GM10248 (cell line): ENCODE measurements at regions of chr20 and their contacts with region 1.

Region 1: GRCh38 chr20:36399147-36399968 is 93.2 kb downstream of the DLGAP4 start:
- DNase-seq: peak; percentile 68
- CTCF ChIP-seq: peak; percentile 46

Region 2: GRCh38 chr20:36004045-36004444 is 395.3 kb before region 1 on chr20:
- CTCF ChIA-PET with region 1: no interaction called
- POLR2A ChIA-PET with region 1: no interaction called
- DNase-seq: no peak
- CTCF ChIP-seq: no peak

Region 3: GRCh38 chr20:36273414-36274180 is 125.8 kb before region 1 on chr20:
- CTCF ChIA-PET with region 1: interaction called, 23 read pairs
- POLR2A ChIA-PET with region 1: no interaction called
- DNase-seq: peak; percentile 51
- CTCF ChIP-seq: peak; percentile 53

Region 4: DNA sequence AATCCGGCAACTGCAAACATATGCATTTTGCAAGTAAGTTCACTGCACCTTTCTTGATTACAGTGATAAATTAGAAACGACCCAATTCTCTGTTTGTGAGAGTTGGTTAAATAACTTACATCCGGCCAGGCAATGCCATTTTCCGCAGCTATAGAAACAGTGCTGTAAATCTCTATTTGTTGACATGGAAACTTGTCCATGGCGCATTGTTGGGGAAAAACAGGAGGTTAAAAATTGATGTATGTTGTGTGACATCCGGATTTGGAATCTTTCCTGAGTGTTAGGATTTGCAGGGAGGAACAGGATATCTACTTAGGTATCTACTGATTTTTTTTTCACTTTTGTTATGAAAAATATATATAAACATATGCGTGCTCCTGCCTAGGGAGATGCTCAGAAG is 26.7 kb before region 1 on chr20:
- CTCF ChIA-PET with region 1: no interaction called
- POLR2A ChIA-PET with region 1: no interaction called
- DNase-seq: no peak
- CTCF ChIP-seq: no peak

Region 5: GRCh38 chr20:36421641-36422040 is 22.3 kb after region 1 on chr20:
- CTCF ChIA-PET with region 1: no interaction called
- POLR2A ChIA-PET with region 1: no interaction called
- DNase-seq: no peak
- CTCF ChIP-seq: no peak

Region 6: DNA sequence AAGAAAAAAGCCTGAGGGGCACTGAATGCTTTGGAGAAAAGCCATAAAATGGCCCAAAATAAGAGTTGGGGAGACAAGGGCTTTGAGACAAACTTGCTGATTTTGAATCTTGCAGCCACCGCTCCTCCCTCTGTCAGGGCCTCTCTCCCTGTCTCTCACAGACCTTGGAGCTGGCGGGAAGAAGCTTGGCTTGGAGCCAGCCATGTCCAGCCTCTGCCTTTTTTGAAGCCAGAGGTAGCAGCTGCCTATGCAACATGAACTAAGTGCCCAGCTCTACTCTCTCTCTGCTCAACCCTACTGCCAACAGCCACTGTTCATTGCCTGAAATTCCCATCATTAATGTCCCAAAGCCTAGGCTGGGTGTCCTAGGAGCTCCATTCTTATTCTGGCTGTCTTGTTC is 1230.8 kb after region 1 on chr20:
- CTCF ChIA-PET with region 1: no interaction called
- POLR2A ChIA-PET with region 1: no interaction called
- DNase-seq: no peak
- CTCF ChIP-seq: no peak